HCT116 (cell line): ENCODE measurements at regions of chr20 and their contacts with region 1.

Region 1: DNA sequence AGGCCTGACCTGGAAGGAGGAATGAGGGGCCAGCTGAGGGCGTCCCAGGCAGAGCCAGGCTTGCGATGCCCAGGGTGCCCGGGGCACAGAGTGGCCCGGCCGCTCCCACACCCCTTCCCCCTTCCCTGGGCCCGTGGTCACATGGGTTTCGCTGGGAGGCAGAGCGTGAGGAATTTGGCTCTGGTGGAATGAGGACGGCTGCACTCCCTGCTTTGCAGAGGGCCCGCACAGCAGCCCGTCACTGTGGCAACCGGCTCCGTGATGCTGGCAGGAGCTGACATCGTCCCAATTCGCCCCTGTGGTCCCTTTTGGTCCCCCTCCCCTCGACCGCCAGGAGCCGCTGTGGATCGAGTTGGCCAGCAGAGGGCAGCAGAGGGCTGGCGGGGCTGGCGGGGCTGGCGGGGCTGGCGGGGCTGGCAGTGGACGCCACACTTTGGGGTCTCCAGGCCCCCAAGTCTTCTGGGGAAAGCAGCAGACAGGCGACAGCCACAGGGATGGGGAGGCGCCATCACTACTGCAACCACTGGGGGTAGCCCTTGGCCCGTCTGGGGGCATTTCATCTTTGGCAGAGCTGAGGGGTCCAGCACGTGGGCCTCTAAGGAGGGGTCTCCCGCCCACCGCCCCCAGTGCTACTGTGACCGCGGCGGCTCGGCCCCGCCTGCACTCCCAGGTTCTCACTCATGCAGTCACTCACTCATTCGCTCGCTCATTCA is 49.6 kb upstream of the BHLHE23 start:
- DNase-seq: no peak
- ATAC-seq: peak; percentile 79
- H3K4me3 ChIP-seq: no peak overlapping the region
- H3K27ac ChIP-seq: no peak overlapping the region
- H3K4me1 ChIP-seq: 0 out of 4 replicates have a peak, but pooled peaks cover 0 to 3% of the 10 kb centered on the region in 2 experiments
- H3K27me3 ChIP-seq: peaks cover 12% of the 10 kb centered on the region; the same call in 1 of the 2 replicates
- CTCF ChIP-seq: peak; percentile 85 to 90 (median 86)
- POLR2A ChIP-seq: no peak
- RAD21 ChIP-seq: peak; percentile 79

Region 2: DNA sequence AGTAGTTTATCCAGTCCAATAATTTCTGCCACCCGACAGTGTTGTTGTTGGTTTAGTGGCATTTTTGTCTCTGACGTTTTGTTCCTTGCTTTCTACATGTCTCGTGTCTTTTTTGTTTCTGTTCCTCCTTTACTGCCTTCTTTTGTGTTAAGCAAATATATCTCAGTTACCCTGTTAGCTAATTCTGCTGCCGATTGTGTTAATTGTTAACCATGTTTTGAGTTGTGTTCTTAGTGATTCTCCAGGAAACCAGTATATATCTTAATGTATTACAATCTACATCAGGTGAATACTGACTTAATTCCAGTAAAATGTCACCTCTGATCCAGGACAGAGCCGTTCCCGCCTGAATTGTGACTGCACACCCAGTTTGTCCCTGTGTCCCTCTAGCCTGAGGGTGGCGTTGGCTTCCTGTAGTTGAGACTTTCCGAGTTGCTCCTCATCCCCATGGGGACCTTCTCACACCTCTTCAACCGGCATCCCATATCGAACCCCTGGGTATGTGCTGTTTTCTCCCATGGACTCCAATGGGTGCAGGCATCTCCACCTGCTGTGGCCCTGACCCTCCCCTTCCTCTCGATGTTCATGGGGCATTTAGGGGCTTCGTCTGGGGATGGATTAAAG is 13.8 kb before region 1 on chr20:
- CTCF ChIA-PET with region 1: no interaction called
- POLR2A ChIA-PET with region 1: no interaction called
- RAD21 ChIA-PET with region 1: no interaction called
- intact Hi-C with region 1: no loop called
- DNase-seq: no peak
- ATAC-seq: no peak; the same call in 1 of the 2 replicates
- H3K4me3 ChIP-seq: no peak overlapping the region
- H3K27ac ChIP-seq: no peak overlapping the region
- H3K4me1 ChIP-seq: no peaks in the 10 kb centered on the region
- H3K27me3 ChIP-seq: peaks cover 31% of the 10 kb centered on the region
- CTCF ChIP-seq: 0 out of 6 replicates have a peak, but pooled peaks of 1 of the 3 experiments have one; percentile 7
- POLR2A ChIP-seq: no peak
- RAD21 ChIP-seq: peak; percentile 34; the same call in 1 of the 2 replicates

Region 3: GRCh38 chr20:63215100-63216040 is 159.0 kb after region 1 on chr20:
- CTCF ChIA-PET with region 1: interaction called, 3 read pairs
- POLR2A ChIA-PET with region 1: no interaction called
- RAD21 ChIA-PET with region 1: no interaction called
- intact Hi-C with region 1: loop called (anchors 1 kb)
- DNase-seq: no peak
- ATAC-seq: peak; percentile 35
- H3K4me3 ChIP-seq: peak overlapping the region; percentile 90 to 95
- H3K27ac ChIP-seq: peak overlapping the region; percentile 87
- H3K4me1 ChIP-seq: peaks cover 14 to 21% of the 10 kb centered on the region in 2 experiments
- H3K27me3 ChIP-seq: no peaks in the 10 kb centered on the region
- CTCF ChIP-seq: peak; percentile 49 to 70 (median 64); a peak in 5 of 6 replicates
- POLR2A ChIP-seq: no peak
- RAD21 ChIP-seq: peak; percentile 70

Region 4: DNA sequence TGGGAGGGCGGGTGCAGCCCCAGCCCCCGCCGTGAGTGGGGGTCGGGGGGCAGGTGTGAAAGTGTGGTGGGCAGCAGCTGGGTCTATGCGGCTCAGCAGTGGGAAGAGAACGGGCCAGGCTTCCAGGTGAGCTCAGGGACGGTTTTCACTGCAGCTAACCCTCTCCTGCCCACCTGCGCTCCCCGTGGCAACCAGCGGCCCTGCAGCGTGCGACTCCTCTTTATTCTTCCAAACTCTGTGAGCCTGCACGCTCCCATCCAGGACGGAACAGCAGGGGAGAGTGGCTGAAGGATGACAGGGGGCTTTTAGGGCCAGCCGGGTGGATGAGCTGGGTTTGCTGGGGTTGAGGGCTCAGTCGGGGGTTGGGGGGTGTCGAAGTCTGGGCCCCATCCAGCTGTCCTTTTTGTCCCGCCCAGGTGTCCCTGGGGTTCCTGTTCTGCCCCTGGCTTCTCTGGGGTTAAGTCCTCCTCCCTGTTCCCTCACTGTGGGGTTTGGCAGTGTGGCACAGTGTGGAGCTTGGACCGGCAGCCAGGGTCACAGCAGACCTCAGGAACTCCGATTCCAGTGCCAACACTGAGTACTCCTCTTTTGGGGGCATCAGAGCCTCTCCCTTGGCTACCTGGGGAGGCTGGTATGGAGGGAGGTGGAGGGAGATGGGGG is 178.5 kb after region 1 on chr20:
- CTCF ChIA-PET with region 1: no interaction called
- POLR2A ChIA-PET with region 1: no interaction called
- RAD21 ChIA-PET with region 1: no interaction called
- intact Hi-C with region 1: no loop called
- DNase-seq: no peak
- ATAC-seq: peak; percentile 84
- H3K4me3 ChIP-seq: peak overlapping the region; percentile 13 to 29; a peak in 3 of 4 replicates
- H3K27ac ChIP-seq: peak overlapping the region; percentile 39; the same call in 1 of the 2 replicates
- H3K4me1 ChIP-seq: peaks cover 38 to 63% of the 10 kb centered on the region in 2 experiments
- H3K27me3 ChIP-seq: no peaks in the 10 kb centered on the region
- CTCF ChIP-seq: peak in 2 of 3 experiments; percentile 74 to 81; a peak in 4 of 6 replicates
- POLR2A ChIP-seq: no peak
- RAD21 ChIP-seq: no peak